Heart left ventricle (tissue), 16 donors: ENCODE measurements at regions of chr7 and their contacts with region 1.

Region 1: GRCh38 chr7:95553939-95554338 is 42.4 kb downstream of the PDK4 start:
- DNase-seq: no peak
- ATAC-seq: no peak
- H3K4me3 ChIP-seq: no peak overlapping the region
- H3K27ac ChIP-seq: peak overlapping the region in 1 of 12 donors; percentile 35
- H3K4me1 ChIP-seq: peaks cover 13 to 25% (median 17%) of the 10 kb centered on the region in 12 donors
- H3K27me3 ChIP-seq: no peaks in the 10 kb centered on the region
- CTCF ChIP-seq: no peak
- POLR2A ChIP-seq: no peak

Region 2: DNA sequence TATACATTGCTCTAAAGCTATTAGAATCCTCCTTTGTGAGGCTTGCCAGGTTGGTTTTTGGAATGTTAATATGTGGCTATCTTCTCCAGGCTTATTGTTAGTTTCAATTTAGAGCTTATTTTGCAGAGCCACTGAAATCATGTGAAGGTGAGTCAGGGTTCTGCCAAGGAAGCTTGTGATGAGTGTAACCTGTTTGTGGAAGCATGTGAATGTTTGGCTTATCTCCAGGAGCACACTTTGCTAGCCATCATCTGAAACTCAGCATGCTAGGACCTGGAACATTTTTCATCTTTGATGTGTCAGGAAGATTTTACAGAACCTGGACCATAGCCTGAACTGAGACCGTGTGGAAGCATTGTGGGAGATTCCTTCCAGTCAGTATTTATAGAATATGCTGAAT is 449.2 kb before region 1 on chr7:
- intact Hi-C with region 1: no loop called
- DNase-seq: no peak
- ATAC-seq: peak in 2 of 4 donors; percentile 20 to 49
- H3K4me3 ChIP-seq: no peak overlapping the region
- H3K27ac ChIP-seq: peak overlapping the region in 2 of 12 donors; percentile 4 to 70
- H3K4me1 ChIP-seq: peaks cover 0 to 10% (median 0%) of the 10 kb centered on the region in 12 donors
- H3K27me3 ChIP-seq: no peaks in the 10 kb centered on the region
- CTCF ChIP-seq: no peak
- POLR2A ChIP-seq: no peak

Region 3: DNA sequence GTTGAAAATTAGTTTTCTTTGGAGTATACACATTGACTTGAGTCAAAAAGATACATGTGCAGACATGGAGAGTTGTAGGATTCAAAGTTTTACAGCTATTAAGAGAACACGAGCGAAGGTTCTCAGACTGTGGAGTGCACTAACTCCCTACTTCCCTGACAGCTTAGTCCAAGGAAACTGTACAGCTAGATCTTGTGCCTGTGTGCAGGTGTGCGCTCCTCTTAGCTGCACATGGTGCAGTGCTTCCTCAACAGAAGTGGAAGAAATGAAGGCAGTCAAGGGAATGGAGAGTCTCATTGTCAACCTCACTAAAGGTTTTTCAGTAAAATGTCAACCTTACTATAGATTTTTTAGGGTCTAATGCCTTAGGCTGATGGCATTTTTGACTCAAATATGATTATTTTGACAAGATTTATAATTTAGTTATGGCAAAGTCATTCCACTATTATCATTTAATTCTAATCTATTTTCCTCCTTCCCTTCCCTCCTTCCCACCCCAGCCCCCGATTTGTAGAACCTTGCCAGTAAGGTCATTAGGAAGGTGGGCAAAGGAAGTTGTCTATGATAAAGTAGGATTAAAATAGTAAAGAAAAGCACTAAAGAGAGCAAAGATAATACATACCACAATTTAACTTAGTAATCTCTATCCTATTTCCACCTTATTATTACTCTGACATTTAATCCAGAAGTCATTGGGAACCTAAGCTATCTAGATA is 28.8 kb after region 1 on chr7:
- intact Hi-C with region 1: loop called in 6 of 10 experiments (anchors 1 to 5 kb)
- DNase-seq: peak in 1 of 5 donors; percentile 43
- ATAC-seq: peak; percentile 49 to 70 (median 60)
- H3K4me3 ChIP-seq: no peak overlapping the region
- H3K27ac ChIP-seq: peak overlapping the region in 3 of 12 donors; percentile 12 to 41 (median 38)
- H3K4me1 ChIP-seq: peaks cover 0 to 23% (median 4%) of the 10 kb centered on the region in 12 donors
- H3K27me3 ChIP-seq: no peaks in the 10 kb centered on the region
- CTCF ChIP-seq: no peak
- POLR2A ChIP-seq: no peak